AG04449 (cell line): ENCODE measurements at regions of chr2 and their contacts with region 1.

Region 1: DNA sequence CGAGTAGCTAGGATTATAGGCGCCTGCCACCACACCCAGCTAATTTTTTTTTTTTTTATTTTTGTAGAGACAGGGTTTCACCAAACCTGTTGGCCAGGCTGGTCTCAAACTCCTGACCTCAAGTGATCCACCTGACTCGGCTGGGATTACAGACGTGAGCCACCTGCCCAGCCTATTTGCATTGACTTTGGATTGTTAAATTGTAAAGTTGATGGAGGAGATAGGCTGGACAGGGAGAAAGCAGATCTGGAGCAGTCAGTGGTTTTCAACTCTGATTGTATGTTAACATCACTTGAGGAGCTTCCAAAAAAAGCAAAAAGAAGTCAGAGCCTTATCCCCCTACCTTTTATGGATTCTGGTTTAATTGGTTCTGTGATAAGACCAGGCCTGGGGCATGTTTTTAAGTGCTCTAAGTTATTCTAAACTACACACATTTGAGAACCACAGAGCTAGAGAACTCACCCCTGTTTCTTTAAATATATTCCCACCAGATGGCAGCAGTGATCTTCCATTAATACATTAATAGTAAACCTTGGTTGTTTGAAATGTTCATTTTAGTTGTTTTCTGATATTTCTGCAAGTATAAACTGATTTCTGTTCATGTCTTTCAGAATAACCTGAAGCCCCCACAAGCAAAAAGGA is 7.5 kb downstream of the C2orf49 start:
- DNase-seq: no peak
- H3K4me3 ChIP-seq: no peak overlapping the region
- CTCF ChIP-seq: peak; percentile 15

Region 2: GRCh38 chr2:105143467-105144151 is 201.2 kb before region 1 on chr2:
- CTCF ChIA-PET with region 1: no interaction called
- POLR2A ChIA-PET with region 1: no interaction called
- DNase-seq: no peak
- H3K4me3 ChIP-seq: peak overlapping the region; percentile 34
- CTCF ChIP-seq: no peak

Region 3: GRCh38 chr2:105329561-105330495 is 15.0 kb before region 1 on chr2 and contains the start of gene TGFBRAP1:
- CTCF ChIA-PET with region 1: interaction called, 20 read pairs
- POLR2A ChIA-PET with region 1: no interaction called
- DNase-seq: no peak
- H3K4me3 ChIP-seq: peak within 1 kb of the TSS; percentile 71
- CTCF ChIP-seq: no peak

Region 4: DNA sequence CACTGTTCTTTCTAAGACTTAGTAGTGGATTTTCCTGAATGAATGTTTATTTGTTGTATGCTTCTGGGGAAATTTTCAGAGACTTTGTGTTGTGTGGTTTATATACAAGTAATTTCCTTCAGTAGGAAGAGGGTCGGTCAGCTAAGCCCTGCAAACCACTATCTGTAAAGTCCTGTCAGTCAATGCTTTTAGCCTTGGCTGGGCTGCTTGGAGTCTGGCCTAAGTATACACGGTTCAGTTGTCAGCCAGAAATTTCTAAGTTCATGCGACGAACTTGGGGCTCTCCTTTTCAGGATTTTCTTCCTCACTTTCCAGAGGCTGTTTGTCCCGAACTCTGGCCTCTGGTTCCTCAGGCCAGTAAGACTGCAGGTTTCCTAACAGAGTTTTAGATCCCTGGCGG is 13.8 kb after region 1 on chr2:
- CTCF ChIA-PET with region 1: interaction called, 19 read pairs
- POLR2A ChIA-PET with region 1: no interaction called
- DNase-seq: no peak
- H3K4me3 ChIP-seq: no peak overlapping the region
- CTCF ChIP-seq: no peak

Region 5: GRCh38 chr2:105431367-105432043 is 86.7 kb after region 1 on chr2:
- CTCF ChIA-PET with region 1: no interaction called
- POLR2A ChIA-PET with region 1: no interaction called
- DNase-seq: no peak
- H3K4me3 ChIP-seq: no peak overlapping the region
- CTCF ChIP-seq: no peak

Region 6: GRCh38 chr2:105545730-105546627 is 201.2 kb after region 1 on chr2:
- CTCF ChIA-PET with region 1: interaction called, 224 read pairs
- POLR2A ChIA-PET with region 1: no interaction called
- DNase-seq: no peak
- H3K4me3 ChIP-seq: no peak overlapping the region
- CTCF ChIP-seq: peak; percentile 77

Region 7: DNA sequence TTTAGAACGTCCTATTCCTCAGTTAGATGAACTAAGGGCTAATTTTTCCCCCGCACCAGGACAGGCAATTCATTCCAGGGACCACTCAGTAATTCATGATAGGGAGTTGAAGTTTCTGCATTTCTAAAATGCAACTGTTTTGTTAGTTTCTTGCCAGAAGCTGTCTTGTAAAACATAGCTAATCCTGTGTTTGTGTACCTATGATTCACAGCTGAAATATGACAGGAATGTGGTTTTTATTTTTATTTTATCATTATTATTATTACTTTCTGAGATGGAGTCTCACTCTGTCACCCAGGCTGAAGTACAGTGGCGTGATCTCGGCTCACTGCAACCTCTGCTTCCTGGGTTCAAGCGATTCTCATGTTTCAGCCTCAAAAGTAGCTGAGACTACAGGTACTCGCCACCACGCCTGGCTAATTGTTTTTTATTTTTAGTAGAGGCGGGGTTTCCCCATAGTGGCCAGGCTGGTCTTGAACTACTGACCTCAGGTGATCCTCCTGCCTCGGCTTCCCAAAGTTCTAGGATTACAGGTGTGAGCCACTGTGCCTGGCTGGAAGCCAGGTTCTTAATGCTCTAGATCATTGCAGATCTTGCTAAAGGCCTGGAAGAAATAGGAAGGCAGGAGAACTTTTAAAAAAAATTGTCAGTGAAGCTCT is 208.8 kb after region 1 on chr2:
- CTCF ChIA-PET with region 1: interaction called, 27 read pairs
- POLR2A ChIA-PET with region 1: no interaction called
- DNase-seq: no peak
- H3K4me3 ChIP-seq: no peak overlapping the region
- CTCF ChIP-seq: no peak